Gastrocnemius medialis (tissue), 4 donors: ENCODE measurements at regions of chr17 and their contacts with region 1.

Region 1: GRCh38 chr17:56699186-56699895 is 105.8 kb downstream of the NOG start:
- DNase-seq: peak in 1 of 2 donors; percentile 38
- ATAC-seq: peak; percentile 85 to 86
- H3K4me3 ChIP-seq: no peak overlapping the region
- H3K27ac ChIP-seq: peak overlapping the region; percentile 9 to 48 (median 32)
- H3K4me1 ChIP-seq: peaks cover 11 to 13% of the 10 kb centered on the region in 2 donors
- H3K27me3 ChIP-seq: no peaks in the 10 kb centered on the region
- CTCF ChIP-seq: no peak
- POLR2A ChIP-seq: no peak

Region 2: DNA sequence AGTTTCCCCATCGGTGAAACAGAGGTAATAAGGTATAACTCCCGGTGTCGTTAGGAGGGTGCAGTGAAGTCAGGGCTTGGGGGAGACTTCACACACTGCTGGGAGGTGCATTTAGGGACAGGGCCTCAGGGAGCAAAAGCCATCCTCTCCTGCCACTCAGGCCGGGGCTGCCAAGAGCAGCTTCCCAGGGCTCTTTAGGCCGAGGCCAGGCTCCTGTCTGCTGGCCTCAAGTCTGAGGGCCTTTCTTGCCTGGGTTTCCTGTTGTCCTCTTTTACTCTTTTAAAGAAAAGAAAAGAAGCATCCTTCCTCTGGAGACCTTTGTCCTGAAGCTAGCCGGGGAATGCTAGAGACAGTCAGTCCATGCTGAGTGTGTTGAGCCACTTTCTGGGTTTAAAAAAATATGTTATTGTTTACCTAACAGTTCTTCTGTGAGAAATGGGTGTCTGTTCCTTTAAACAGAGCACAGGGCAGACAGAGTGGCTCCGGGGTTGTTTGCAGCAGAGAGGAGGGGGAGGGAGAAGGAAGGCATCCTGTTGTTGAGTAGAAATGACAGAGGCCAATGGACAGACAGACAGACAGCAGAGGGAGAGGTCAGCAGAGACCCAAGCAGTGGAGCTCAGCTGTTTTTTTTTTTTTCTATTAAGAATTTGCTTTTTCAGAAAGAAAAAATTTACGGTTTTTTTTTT is 55.3 kb after region 1 on chr17:
- in situ Hi-C with region 1: no loop called
- intact Hi-C with region 1: loop called (anchors 10 kb)
- DNase-seq: no peak
- ATAC-seq: no peak
- H3K4me3 ChIP-seq: no peak overlapping the region
- H3K27ac ChIP-seq: no peak overlapping the region
- H3K4me1 ChIP-seq: peaks cover 0 to 5% of the 10 kb centered on the region in 2 donors
- H3K27me3 ChIP-seq: no peaks in the 10 kb centered on the region
- CTCF ChIP-seq: no peak
- POLR2A ChIP-seq: no peak